ENCODE measurements at regions of chr2 and their contacts with region 1.

Region 1: GRCh38 chr2:198762441-198762840 is 695.3 kb downstream of the SATB2 start:
- DNase-seq: no peak
- H3K4me3 ChIP-seq: no peak overlapping the region
- H3K27ac ChIP-seq: no peak overlapping the region
- H3K4me1 ChIP-seq: no peaks in the 10 kb centered on the region
- H3K27me3 ChIP-seq: no peaks in the 10 kb centered on the region
- CTCF ChIP-seq: no peak
- EP300 ChIP-seq: no peak
- POLR2A ChIP-seq: no peak

Region 2: GRCh38 chr2:198700319-198700718 is 62.1 kb before region 1 on chr2:
- intact Hi-C with region 1: loop called in 1 of 4 experiments (anchors 5 kb)
- DNase-seq: no peak
- H3K4me3 ChIP-seq: no peak overlapping the region
- H3K27ac ChIP-seq: no peak overlapping the region
- H3K4me1 ChIP-seq: no peaks in the 10 kb centered on the region
- H3K27me3 ChIP-seq: peaks cover 2% of the 10 kb centered on the region
- CTCF ChIP-seq: no peak
- EP300 ChIP-seq: no peak
- POLR2A ChIP-seq: no peak

Region 3: DNA sequence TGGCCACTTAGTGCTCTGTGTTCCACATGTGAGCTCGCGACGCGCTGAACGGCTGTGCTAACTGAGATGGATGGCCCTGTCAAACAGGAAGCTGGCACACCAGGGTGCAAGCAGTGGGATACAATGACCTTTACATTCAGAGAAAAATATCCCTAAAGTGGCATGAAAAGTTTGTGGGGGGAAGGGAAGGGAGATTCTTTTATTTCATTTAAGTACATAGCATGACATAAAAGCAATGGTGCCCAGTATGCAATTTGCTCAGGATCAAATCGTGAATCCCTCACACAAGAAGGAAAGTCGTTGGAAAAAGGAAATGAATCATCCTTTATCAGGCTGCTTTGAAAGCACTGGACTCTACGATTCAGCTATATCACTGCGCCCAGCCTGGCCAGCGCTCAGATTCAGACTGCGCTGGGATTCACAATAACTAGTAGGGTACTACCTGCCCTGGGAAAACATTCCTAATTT is 669.3 kb after region 1 on chr2:
- intact Hi-C with region 1: no loop called
- DNase-seq: no peak
- H3K4me3 ChIP-seq: no peak overlapping the region
- H3K27ac ChIP-seq: no peak overlapping the region
- H3K4me1 ChIP-seq: no peaks in the 10 kb centered on the region
- H3K27me3 ChIP-seq: no peaks in the 10 kb centered on the region
- CTCF ChIP-seq: no peak
- EP300 ChIP-seq: no peak
- POLR2A ChIP-seq: no peak